K562 (cell line): ENCODE measurements at regions of chr1 and their contacts with region 1.

Region 1: GRCh38 chr1:244431166-244431565 is 20.5 kb downstream of the ADSS2 start:
- DNase-seq: no peak
- ATAC-seq: no peak
- H3K4me3 ChIP-seq: no peak overlapping the region
- H3K27ac ChIP-seq: no peak overlapping the region
- H3K4me1 ChIP-seq: no peaks in the 10 kb centered on the region
- H3K27me3 ChIP-seq: no peaks in the 10 kb centered on the region
- CTCF ChIP-seq: no peak
- EP300 ChIP-seq: no peak
- POLR2A ChIP-seq: no peak
- RAD21 ChIP-seq: no peak

Region 2: DNA sequence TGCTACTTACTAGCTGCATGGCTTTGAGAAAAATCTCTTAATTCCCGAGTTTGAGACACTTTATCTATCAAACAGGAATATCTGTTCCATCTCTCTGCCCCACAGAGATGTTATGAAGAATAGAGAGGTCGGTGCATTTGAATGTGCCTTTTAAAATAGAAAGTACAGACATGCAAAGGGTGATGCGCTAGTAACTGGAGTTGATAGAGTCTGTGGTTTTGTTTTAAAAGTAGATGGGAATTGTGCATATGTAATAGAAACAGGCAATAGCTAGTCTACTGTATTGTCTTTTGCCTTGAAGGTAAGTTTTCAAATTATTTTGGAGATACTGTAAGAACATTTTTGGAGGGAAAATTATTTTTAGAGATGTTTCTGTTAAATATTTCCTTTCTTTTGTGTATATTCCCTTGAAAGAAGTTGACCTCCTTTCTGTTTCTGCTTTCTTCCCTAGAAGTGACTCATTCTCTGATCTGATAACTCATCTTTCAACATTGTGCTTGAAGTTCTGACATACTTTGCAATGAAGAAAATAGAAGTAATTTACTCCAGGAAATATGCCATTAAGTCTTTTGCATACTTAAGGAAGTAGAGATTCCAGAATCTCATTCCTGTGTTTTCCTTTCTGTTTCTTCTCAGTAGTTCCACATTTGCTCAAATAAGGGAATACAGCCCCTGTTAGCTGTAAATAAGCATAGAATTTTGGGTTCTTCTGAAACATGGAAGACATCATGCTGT is 1023.7 kb before region 1 on chr1:
- CTCF ChIA-PET with region 1: no interaction called
- POLR2A ChIA-PET with region 1: no interaction called
- in situ Hi-C with region 1: no loop called
- intact Hi-C with region 1: no loop called
- DNase-seq: no peak
- ATAC-seq: no peak
- H3K4me3 ChIP-seq: no peak overlapping the region
- H3K27ac ChIP-seq: no peak overlapping the region
- H3K4me1 ChIP-seq: no peaks in the 10 kb centered on the region; a peak in 2 of 5 replicates
- H3K27me3 ChIP-seq: no peaks in the 10 kb centered on the region
- CTCF ChIP-seq: no peak
- EP300 ChIP-seq: no peak
- POLR2A ChIP-seq: no peak
- RAD21 ChIP-seq: 0 out of 4 replicates have a peak, but pooled peaks of 1 of the 2 experiments have one; percentile 15

Region 3: GRCh38 chr1:244414543-244414942 is 16.6 kb before region 1 on chr1:
- CTCF ChIA-PET with region 1: no interaction called
- POLR2A ChIA-PET with region 1: interaction called, 15 read pairs
- in situ Hi-C with region 1: no loop called
- intact Hi-C with region 1: no loop called
- DNase-seq: peak in 1 of 4 experiments; percentile 20
- ATAC-seq: peak; percentile 68; the same call in 2 of the 3 replicates
- H3K4me3 ChIP-seq: no peak overlapping the region
- H3K27ac ChIP-seq: no peak overlapping the region
- H3K4me1 ChIP-seq: no peaks in the 10 kb centered on the region
- H3K27me3 ChIP-seq: no peaks in the 10 kb centered on the region
- CTCF ChIP-seq: peak in 2 of 3 experiments; percentile 21; a peak in 2 of 6 replicates
- EP300 ChIP-seq: no peak
- POLR2A ChIP-seq: no peak
- RAD21 ChIP-seq: peak in 1 of 2 experiments; percentile 50; a peak in 2 of 4 replicates